Dendritic cell treated with granulocyte-macrophage colony-stimulating factor and Interleukin-4, amounts not matched to agents 40 ng/mL and 50 ng/mL, for 4 days (primary cell): ENCODE measurements at regions of chr2 and their contacts with region 1.

Region 1: DNA sequence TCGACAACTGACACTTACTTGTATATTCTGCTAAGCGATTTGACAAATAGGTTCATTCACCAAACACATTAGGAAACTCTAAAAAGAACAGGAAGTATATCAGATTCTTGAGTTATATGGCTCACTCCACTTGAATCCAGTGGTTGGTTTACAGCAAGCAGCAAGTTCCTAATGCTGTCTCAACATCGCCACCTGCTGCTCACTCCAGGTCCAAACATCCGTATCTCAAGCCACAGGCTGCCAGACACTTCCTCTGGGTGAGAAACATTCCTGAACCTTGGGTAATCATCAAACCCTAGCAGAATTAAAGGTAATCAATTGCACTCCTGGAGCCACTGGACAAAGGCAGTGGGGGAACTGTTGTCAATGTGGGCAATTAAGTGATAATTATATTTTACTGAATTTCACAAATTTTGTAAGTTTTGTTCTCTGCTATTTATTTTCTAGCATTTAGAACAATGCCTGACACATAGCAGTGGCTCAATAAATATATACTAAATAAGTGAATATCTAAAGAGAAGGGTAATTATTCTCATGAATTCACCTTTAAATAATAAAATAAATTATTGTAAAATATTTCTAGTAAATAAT is 107.1 kb upstream of the TTN start:
- H3K4me3 Mint-ChIP-seq: no peak overlapping the region
- H3K27ac Mint-ChIP-seq: no peak overlapping the region
- H3K4me1 Mint-ChIP-seq: peaks cover 10% of the 10 kb centered on the region
- H3K27me3 Mint-ChIP-seq: peaks cover 2% of the 10 kb centered on the region

Region 2: DNA sequence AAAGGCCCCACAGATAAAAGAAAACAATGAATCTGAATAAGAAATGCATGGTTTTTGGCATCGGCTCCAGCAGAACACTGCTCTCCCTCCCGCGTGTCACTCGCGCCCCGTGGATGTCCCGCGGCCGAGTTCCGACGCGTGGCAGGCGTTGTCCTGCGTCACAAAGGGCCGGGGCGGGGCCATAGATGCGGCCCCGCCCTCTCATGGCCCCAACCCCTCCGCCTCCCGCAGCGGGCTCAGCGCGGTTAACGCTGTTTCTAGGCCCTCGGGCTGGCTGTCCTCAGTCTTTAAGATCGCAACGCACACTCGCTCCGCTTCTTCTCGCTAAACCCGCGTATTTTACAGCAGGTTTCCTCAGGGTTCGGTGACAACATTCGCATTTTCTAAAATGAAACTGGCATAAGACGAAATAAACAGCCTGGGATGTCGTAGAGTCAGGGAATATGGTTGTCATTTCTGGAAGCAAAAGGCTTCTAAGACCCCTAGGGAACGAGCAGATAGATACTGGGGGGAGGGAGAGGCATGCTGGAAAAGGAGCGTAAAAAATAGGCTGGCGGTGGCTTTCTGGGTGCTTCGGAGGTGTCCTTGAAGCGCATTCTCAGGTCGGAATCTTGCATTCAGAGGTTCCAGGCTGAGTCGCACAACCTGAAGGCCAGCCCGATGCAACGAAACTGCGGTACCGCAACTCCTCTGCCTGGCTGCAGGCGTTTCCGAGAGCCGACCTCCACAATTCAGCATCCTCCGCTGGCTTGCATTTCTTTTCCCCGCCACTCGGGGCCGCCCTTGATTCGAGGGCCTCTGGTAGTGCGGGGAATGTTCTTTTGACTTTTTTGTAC is 435.7 kb before region 1 on chr2 and contains the start of gene FKBP7:
- intact Hi-C with region 1: loop called (anchors 5 kb)
- H3K4me3 Mint-ChIP-seq: peak within 1 kb of the TSS; percentile 95
- H3K27ac Mint-ChIP-seq: peak within 1 kb of the TSS; percentile 98
- H3K4me1 Mint-ChIP-seq: peaks cover 23% of the 10 kb centered on the region
- H3K27me3 Mint-ChIP-seq: no peaks in the 10 kb centered on the region

Region 3: GRCh38 chr2:178704877-178705276 is 209.5 kb before region 1 on chr2:
- intact Hi-C with region 1: loop called (anchors 2 kb)
- H3K4me3 Mint-ChIP-seq: no peak overlapping the region
- H3K27ac Mint-ChIP-seq: no peak overlapping the region
- H3K4me1 Mint-ChIP-seq: peaks cover 5% of the 10 kb centered on the region
- H3K27me3 Mint-ChIP-seq: no peaks in the 10 kb centered on the region

Region 4: DNA sequence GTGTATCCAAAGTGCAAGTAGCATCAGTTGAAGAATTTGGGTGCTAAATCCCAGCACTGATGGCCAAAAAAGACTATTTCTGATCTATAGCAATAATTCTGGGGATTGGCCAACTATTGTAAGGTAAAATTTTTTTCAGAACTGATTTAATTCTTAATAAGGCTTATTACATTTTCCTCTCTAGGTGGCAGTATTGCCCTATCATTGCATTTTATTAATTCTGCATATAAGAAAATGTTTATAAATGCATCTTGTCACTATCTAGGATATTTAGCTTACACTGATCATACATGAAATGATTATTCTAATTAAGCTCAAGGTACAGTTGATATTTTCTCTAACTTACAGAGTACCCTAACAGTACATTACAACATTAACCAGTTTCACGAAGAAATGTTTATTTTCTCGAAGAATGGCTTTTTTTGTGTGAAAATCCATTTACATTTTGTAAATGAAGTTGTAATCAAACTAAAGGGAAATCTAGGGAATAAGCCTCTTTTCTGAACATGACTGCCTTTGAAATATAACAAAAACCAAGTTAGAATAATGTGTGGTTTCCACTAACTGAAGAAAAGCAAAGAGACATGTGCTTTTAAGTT is 118.2 kb before region 1 on chr2:
- intact Hi-C with region 1: loop called (anchors 2 kb)
- H3K4me3 Mint-ChIP-seq: no peak overlapping the region
- H3K27ac Mint-ChIP-seq: no peak overlapping the region
- H3K4me1 Mint-ChIP-seq: no peaks in the 10 kb centered on the region
- H3K27me3 Mint-ChIP-seq: no peaks in the 10 kb centered on the region

Region 5: GRCh38 chr2:178877874-178878273 is 36.5 kb before region 1 on chr2:
- intact Hi-C with region 1: no loop called
- H3K4me3 Mint-ChIP-seq: no peak overlapping the region
- H3K27ac Mint-ChIP-seq: no peak overlapping the region
- H3K4me1 Mint-ChIP-seq: no peaks in the 10 kb centered on the region
- H3K27me3 Mint-ChIP-seq: no peaks in the 10 kb centered on the region

Region 6: GRCh38 chr2:178891265-178891958 is 22.9 kb before region 1 on chr2:
- intact Hi-C with region 1: loop called (anchors 1 kb)
- H3K4me3 Mint-ChIP-seq: no peak overlapping the region
- H3K27ac Mint-ChIP-seq: peak overlapping the region; percentile 53
- H3K4me1 Mint-ChIP-seq: peaks cover 16% of the 10 kb centered on the region
- H3K27me3 Mint-ChIP-seq: peaks cover 1% of the 10 kb centered on the region

Region 7: GRCh38 chr2:179264368-179265081 is 350.2 kb after region 1 on chr2 and contains the start of gene SESTD1:
- intact Hi-C with region 1: loop called (anchors 10 kb)
- H3K4me3 Mint-ChIP-seq: peak within 1 kb of the TSS; percentile 99
- H3K27ac Mint-ChIP-seq: peak within 1 kb of the TSS; percentile 97
- H3K4me1 Mint-ChIP-seq: peaks cover 46% of the 10 kb centered on the region
- H3K27me3 Mint-ChIP-seq: no peaks in the 10 kb centered on the region